Heart left ventricle (tissue), 16 donors: ENCODE measurements at regions of chr21 and their contacts with region 1.

Region 1: GRCh38 chr21:26597981-26598380 is 24.9 kb upstream of the CYYR1 start:
- DNase-seq: no peak
- ATAC-seq: no peak
- H3K4me3 ChIP-seq: no peak overlapping the region
- H3K27ac ChIP-seq: no peak overlapping the region
- H3K4me1 ChIP-seq: no peaks in the 10 kb centered on the region
- H3K27me3 ChIP-seq: no peaks in the 10 kb centered on the region
- CTCF ChIP-seq: no peak
- POLR2A ChIP-seq: no peak

Region 2: GRCh38 chr21:26539566-26539965 is 58.4 kb before region 1 on chr21:
- intact Hi-C with region 1: loop called in 1 of 10 experiments (anchors 10 kb)
- DNase-seq: no peak
- ATAC-seq: no peak
- H3K4me3 ChIP-seq: no peak overlapping the region
- H3K27ac ChIP-seq: peak overlapping the region in 1 of 12 donors; percentile 3
- H3K4me1 ChIP-seq: peaks cover 0 to 8% (median 0%) of the 10 kb centered on the region in 12 donors
- H3K27me3 ChIP-seq: no peaks in the 10 kb centered on the region
- CTCF ChIP-seq: no peak
- POLR2A ChIP-seq: no peak